PC-9 (cell line): ENCODE measurements at regions of chr1 and their contacts with region 1.

Region 1: GRCh38 chr1:199794105-199794863 is 233.2 kb upstream of the NR5A2 start:
- DNase-seq: no peak
- H3K4me3 ChIP-seq: no peak overlapping the region
- H3K27ac ChIP-seq: no peak overlapping the region
- H3K4me1 ChIP-seq: 0 out of 2 replicates have a peak, but pooled peaks cover 3% of the 10 kb centered on the region
- H3K27me3 ChIP-seq: no peaks in the 10 kb centered on the region
- CTCF ChIP-seq: no peak

Region 2: DNA sequence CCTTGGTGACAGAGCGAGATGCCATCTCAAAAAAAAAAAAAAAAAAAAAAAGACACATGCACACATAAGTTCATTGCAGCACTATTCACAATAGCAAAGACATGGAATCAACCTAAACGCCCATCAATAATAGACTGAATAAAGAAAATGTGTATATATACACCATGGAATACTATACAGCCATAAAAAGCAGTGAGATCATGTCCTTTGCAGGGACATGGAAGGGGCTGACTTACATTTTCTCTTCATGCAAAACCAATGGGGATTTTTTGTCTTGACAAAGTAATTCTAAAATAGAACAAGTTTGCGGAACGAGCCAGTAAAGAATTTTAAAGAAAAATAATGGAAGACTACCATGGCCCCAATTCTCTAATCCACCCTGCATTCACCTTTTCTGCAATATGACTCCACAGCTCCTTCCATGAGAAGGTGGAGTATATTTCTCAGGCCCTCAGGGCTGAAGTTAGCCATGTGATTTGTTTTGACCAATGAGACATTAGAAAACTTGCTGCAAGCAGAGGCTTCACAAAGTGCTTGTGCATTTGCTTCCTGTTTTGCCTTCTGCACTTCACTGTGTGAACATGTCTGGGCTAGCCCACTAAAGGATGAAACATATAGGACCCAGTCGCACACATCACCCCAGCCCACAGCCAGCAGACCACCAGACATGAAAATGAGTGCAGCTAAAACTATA is 154.4 kb after region 1 on chr1:
- CTCF ChIA-PET with region 1: no interaction called
- POLR2A ChIA-PET with region 1: no interaction called
- intact Hi-C with region 1: no loop called
- DNase-seq: no peak
- H3K4me3 ChIP-seq: no peak overlapping the region
- H3K27ac ChIP-seq: no peak overlapping the region
- H3K4me1 ChIP-seq: no peaks in the 10 kb centered on the region
- H3K27me3 ChIP-seq: no peaks in the 10 kb centered on the region
- CTCF ChIP-seq: no peak

Region 3: GRCh38 chr1:200022239-200022804 is 228.0 kb after region 1 on chr1:
- CTCF ChIA-PET with region 1: no interaction called
- POLR2A ChIA-PET with region 1: interaction called, 13 read pairs
- intact Hi-C with region 1: no loop called
- DNase-seq: no peak
- H3K4me3 ChIP-seq: no peak overlapping the region
- H3K27ac ChIP-seq: no peak overlapping the region
- H3K4me1 ChIP-seq: peaks cover 6% of the 10 kb centered on the region; the same call in 1 of the 2 replicates
- H3K27me3 ChIP-seq: no peaks in the 10 kb centered on the region
- CTCF ChIP-seq: no peak

Region 4: DNA sequence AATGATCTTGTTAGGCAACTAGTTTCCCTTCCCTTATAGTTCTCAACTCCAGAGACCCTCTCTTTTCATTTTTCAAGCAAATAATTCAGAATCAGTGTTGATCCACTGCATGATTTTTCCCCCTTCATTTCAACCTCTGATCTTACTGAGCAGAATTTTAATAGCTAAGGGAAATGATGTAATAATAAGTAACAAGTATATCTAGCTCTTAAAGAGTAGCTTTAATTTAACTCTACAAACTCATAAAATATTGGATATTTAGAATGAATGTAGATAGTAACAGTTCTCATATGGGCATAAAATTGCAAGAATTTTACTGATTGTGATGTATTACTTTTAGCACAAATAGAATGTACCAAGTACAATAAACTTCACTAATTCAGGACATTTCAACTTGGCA is 363.4 kb after region 1 on chr1:
- CTCF ChIA-PET with region 1: no interaction called
- POLR2A ChIA-PET with region 1: interaction called, 16 read pairs
- intact Hi-C with region 1: no loop called
- DNase-seq: no peak
- H3K4me3 ChIP-seq: no peak overlapping the region
- H3K27ac ChIP-seq: no peak overlapping the region
- H3K4me1 ChIP-seq: 0 out of 2 replicates have a peak, but pooled peaks cover 10% of the 10 kb centered on the region
- H3K27me3 ChIP-seq: no peaks in the 10 kb centered on the region
- CTCF ChIP-seq: no peak

Region 5: GRCh38 chr1:200811704-200812103 is 1017.4 kb after region 1 on chr1:
- CTCF ChIA-PET with region 1: no interaction called
- POLR2A ChIA-PET with region 1: no interaction called
- intact Hi-C with region 1: no loop called
- DNase-seq: no peak
- H3K4me3 ChIP-seq: no peak overlapping the region
- H3K27ac ChIP-seq: no peak overlapping the region
- H3K4me1 ChIP-seq: no peaks in the 10 kb centered on the region
- H3K27me3 ChIP-seq: no peaks in the 10 kb centered on the region
- CTCF ChIP-seq: no peak